Activated CD8-positive, alpha-beta memory T cell treated with anti-CD3 and anti-CD28 coated beads, Interleukin-2, amount 10 ng/mL, durations not matched to agents 7 days and 5 days (primary cell): ENCODE measurements at regions of chr13 and their contacts with region 1.

Region 1: GRCh38 chr13:48094781-48095502 is at the start of gene MED4:
- DNase-seq: peak; percentile 97
- ATAC-seq: peak; percentile 97
- H3K4me3 Mint-ChIP-seq: peak within 1 kb of the TSS; percentile 96
- H3K27ac Mint-ChIP-seq: peak within 1 kb of the TSS; percentile 88
- H3K4me1 Mint-ChIP-seq: peaks cover 36% of the 10 kb centered on the region
- H3K27me3 Mint-ChIP-seq: peaks cover 3% of the 10 kb centered on the region
- total RNA-seq, gene MED4: 53.8 to 58.8 TPM

Region 2: GRCh38 chr13:47955836-47956235 is 139.1 kb before region 1 on chr13:
- CTCF ChIA-PET with region 1: no interaction called
- DNase-seq: no peak
- ATAC-seq: no peak
- H3K4me3 Mint-ChIP-seq: no peak overlapping the region
- H3K27ac Mint-ChIP-seq: no peak overlapping the region
- H3K4me1 Mint-ChIP-seq: no peaks in the 10 kb centered on the region
- H3K27me3 Mint-ChIP-seq: no peaks in the 10 kb centered on the region

Region 3: DNA sequence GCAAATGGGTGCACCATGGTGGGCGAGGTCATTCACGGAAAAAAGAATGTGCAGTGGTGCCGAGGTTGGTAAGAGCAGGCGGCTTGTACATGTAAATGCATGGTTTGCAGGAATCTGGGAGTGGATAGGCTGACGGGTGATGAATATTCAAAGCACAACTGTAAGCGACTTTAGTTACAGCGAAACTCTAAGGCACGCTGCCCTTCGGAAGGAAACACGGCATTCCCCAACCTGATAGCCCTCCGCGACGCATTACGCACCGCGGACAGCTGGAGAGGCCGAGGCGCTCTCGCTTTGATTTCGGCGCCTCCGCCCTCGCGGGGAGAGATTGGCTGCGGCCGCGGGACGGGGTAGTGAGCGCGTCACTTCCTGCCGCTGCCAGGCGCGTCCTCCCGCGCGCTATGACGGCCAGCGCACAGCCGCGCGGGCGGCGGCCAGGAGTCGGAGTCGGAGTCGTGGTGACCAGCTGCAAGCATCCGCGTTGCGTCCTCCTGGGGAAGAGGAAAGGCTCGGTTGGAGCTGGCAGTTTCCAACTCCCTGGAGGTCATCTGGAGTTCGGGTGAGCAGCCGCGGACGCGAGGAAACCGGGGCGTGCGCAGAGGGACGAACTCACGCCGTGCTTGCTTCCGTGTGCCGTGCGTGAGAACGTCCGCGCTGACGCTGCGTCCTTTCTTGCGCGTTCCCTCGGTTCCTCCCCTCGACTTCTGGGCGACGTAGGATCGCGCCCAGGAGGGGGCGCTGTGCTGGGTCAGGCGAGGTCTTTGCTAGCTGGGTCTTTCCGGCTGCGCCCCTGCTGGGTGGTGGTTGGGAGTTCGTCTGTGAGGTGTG is 57.4 kb before region 1 on chr13 and contains the start of gene NUDT15:
- CTCF ChIA-PET with region 1: interaction called, 38 read pairs
- DNase-seq: peak; percentile 97
- ATAC-seq: peak; percentile 92
- H3K4me3 Mint-ChIP-seq: peak within 1 kb of the TSS; percentile 96
- H3K27ac Mint-ChIP-seq: peak within 1 kb of the TSS; percentile 95
- H3K4me1 Mint-ChIP-seq: peaks cover 42% of the 10 kb centered on the region
- H3K27me3 Mint-ChIP-seq: no peaks in the 10 kb centered on the region
- total RNA-seq, gene NUDT15: 10.6 to 13.7 TPM

Region 4: GRCh38 chr13:48043789-48044503 is 51.0 kb before region 1 on chr13:
- CTCF ChIA-PET with region 1: interaction called, 38 read pairs
- DNase-seq: no peak
- ATAC-seq: peak; percentile 91
- H3K4me3 Mint-ChIP-seq: no peak overlapping the region
- H3K27ac Mint-ChIP-seq: peak overlapping the region; percentile 86
- H3K4me1 Mint-ChIP-seq: peaks cover 45% of the 10 kb centered on the region
- H3K27me3 Mint-ChIP-seq: no peaks in the 10 kb centered on the region

Region 5: DNA sequence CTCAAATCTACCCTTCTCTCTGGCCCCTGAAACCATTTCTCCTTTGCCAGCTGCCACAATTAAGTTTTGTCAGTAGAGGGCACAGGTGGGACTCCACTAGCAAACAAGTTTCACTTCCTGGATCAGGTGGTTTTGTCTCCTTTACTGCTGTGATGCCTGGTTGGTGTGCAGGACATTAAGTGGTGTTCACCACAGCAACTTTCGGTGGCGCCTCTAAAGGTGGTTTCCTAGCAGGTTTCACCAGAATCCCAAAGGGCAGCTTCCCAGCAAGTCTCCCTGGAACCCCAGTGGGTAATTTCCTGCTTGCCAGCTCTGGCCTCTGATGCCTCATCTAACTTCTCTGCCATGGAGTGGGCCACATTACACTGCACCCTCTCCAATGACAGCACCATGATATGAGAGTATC is 16.7 kb before region 1 on chr13:
- CTCF ChIA-PET with region 1: interaction called, 20 read pairs
- DNase-seq: peak; percentile 60
- ATAC-seq: peak; percentile 93
- H3K4me3 Mint-ChIP-seq: no peak overlapping the region
- H3K27ac Mint-ChIP-seq: peak overlapping the region; percentile 69
- H3K4me1 Mint-ChIP-seq: peaks cover 10% of the 10 kb centered on the region
- H3K27me3 Mint-ChIP-seq: no peaks in the 10 kb centered on the region

Region 6: GRCh38 chr13:48121733-48122132 is 26.8 kb after region 1 on chr13:
- CTCF ChIA-PET with region 1: interaction called, 10 read pairs
- DNase-seq: no peak
- ATAC-seq: no peak
- H3K4me3 Mint-ChIP-seq: no peak overlapping the region
- H3K27ac Mint-ChIP-seq: no peak overlapping the region
- H3K4me1 Mint-ChIP-seq: peaks cover under 1% of the 10 kb centered on the region
- H3K27me3 Mint-ChIP-seq: no peaks in the 10 kb centered on the region

Region 7: GRCh38 chr13:48291730-48292129 is 196.8 kb after region 1 on chr13:
- CTCF ChIA-PET with region 1: no interaction called
- DNase-seq: no peak
- ATAC-seq: no peak
- H3K4me3 Mint-ChIP-seq: no peak overlapping the region
- H3K27ac Mint-ChIP-seq: no peak overlapping the region
- H3K4me1 Mint-ChIP-seq: peaks cover 8% of the 10 kb centered on the region
- H3K27me3 Mint-ChIP-seq: peaks cover 22% of the 10 kb centered on the region

Region 8: DNA sequence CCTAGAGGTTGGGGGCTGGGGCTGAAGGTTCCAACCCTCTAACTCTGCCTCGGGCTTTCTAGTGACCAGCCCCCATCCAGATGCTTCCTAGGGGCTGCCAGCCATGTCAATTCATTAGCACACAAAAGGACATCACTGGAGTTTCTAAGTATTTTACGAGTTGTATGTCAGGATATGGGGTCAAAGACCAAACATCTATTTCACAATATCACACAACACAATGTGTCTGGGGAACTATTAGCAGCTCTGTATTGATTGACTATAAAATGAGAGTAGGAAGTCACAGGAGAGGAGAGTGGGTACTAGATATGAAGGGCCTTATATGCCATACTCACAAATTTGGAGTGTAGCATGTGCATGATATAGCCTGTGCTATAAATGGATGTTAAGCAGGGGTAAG is 275.9 kb after region 1 on chr13:
- CTCF ChIA-PET with region 1: no interaction called
- DNase-seq: no peak
- ATAC-seq: no peak
- H3K4me3 Mint-ChIP-seq: no peak overlapping the region
- H3K27ac Mint-ChIP-seq: no peak overlapping the region
- H3K4me1 Mint-ChIP-seq: no peaks in the 10 kb centered on the region
- H3K27me3 Mint-ChIP-seq: no peaks in the 10 kb centered on the region